BJ (cell line): ENCODE measurements at regions of chr7 and their contacts with region 1.

Region 1: GRCh38 chr7:128739048-128739962 is at the start of gene CALU:
- DNase-seq: peak; percentile 84
- H3K4me3 ChIP-seq: peak within 1 kb of the TSS; percentile 81
- H3K27me3 ChIP-seq: no peaks in the 10 kb centered on the region
- CTCF ChIP-seq: no peak
- polyA plus RNA-seq, gene CALU: 346 and 812 TPM in 2 replicates

Region 2: GRCh38 chr7:128008141-128008540 is 731.2 kb before region 1 on chr7:
- CTCF ChIA-PET with region 1: no interaction called
- POLR2A ChIA-PET with region 1: interaction called, 14 read pairs
- DNase-seq: no peak
- H3K4me3 ChIP-seq: no peak overlapping the region
- H3K27me3 ChIP-seq: no peaks in the 10 kb centered on the region
- CTCF ChIP-seq: no peak

Region 3: DNA sequence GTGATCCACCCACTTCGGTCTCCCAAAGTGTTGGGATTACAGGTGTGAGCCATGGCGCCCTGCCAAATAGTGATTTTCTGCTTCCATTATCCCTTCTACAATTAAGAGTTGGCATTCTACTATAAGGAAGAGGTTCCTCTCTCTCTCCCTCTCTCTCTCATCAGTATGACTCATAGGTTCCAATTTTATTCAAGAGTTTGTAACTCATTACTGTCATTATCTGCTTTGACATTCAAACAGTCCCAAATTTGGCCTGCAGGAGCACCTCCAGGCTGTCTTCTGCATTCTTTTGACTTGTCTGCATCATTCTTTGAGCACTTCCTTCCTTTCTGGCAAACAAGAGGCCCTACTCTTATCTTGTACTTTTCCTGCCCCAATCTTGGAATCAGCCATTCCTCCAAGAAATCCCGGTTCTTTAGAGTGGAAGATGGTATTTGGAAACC is 33.4 kb before region 1 on chr7:
- CTCF ChIA-PET with region 1: no interaction called
- POLR2A ChIA-PET with region 1: interaction called, 19 read pairs
- DNase-seq: peak; percentile 22
- H3K4me3 ChIP-seq: no peak overlapping the region
- H3K27me3 ChIP-seq: no peaks in the 10 kb centered on the region
- CTCF ChIP-seq: peak; percentile 13; the same call in 1 of the 2 replicates

Region 4: DNA sequence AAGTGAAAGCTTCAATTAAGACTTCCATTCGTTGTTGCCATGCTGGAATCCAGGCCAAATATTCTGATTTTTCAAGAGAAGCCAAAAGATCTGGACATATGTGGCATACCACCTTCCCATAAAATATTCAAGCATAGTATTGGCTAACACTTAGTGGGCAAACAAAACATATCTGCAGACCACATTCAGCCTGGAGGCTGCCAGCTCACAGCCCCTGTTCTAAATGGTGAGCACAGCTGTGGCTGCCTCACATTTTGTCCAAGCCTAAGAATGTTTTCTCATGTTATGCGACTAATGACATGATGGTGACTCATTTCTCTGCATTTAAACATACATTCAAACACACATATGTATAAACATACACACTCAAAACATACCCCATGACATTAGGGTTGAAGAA is 10.7 kb before region 1 on chr7:
- CTCF ChIA-PET with region 1: interaction called, 5 read pairs
- POLR2A ChIA-PET with region 1: interaction called, 10 read pairs
- DNase-seq: no peak
- H3K4me3 ChIP-seq: no peak overlapping the region
- H3K27me3 ChIP-seq: peaks cover 6% of the 10 kb centered on the region
- CTCF ChIP-seq: no peak

Region 5: DNA sequence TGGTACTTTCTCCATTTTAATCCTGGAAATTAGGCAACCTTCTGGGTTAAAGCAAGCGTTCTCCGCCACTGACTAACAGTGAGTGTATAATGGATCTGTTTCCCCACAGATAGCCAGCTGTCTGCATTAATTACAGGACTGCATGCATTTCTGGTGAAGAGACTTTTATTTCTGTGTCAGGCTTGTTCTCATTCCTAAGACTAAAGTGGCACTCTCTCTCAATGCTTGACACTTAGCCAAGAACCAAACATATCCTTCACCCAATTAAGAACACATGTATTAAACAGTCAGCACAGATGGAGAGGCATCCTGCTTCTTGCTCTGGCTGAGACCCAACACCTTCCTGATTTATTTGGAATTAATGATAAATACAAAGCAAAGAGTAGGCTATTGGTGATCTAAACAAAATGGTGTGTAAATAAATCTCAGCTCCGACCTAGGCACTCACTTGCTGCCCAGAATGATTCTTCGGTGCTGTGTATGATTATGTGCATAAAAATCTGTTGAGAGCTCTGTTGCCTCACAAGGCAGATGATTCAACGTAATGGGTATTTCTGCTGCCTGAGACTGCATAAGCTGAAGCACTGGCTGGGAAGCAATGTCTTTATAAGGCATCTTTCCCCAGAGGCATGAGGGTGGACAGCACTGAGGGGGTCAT is 16.6 kb after region 1 on chr7:
- CTCF ChIA-PET with region 1: interaction called, 12 read pairs
- POLR2A ChIA-PET with region 1: interaction called, 19 read pairs
- DNase-seq: peak; percentile 94
- H3K4me3 ChIP-seq: no peak overlapping the region
- H3K27me3 ChIP-seq: no peaks in the 10 kb centered on the region
- CTCF ChIP-seq: no peak

Region 6: DNA sequence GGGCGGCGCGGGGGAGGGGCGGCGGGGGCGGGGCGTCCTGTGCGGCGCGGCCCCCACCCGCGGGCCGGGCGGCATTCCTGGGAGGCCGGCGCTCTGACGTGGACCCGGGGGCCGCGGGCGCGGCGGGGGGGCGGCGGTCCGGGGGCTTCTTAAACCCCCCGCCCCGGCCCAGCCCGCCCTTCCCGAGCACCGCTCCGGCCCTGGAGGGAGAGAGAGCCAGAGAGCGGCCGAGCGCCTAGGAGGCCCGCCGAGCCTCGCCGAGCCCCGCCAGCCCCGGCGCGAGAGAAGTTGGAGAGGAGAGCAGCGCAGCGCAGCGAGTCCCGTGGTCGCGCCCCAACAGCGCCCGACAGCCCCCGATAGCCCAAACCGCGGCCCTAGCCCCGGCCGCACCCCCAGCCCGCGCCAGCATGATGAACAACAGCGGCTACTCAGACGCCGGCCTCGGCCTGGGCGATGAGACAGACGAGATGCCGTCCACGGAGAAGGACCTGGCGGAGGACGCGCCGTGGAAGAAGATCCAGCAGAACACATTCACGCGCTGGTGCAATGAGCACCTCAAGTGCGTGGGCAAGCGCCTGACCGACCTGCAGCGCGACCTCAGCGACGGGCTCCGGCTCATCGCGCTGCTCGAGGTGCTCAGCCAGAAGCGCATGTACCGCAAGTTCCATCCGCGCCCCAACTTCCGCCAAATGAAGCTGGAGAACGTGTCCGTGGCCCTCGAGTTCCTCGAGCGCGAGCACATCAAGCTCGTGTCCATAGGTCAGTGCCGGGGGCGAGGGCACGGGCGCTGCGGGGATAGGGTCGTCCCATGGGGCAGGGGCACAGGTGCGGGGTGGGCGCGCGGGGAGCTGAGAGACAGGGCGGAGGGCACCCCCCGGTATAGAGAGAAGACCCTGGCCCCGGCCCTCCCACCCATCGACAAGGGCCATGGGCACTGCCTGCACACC is 91.2 kb after region 1 on chr7 and contains the start of gene FLNC:
- CTCF ChIA-PET with region 1: interaction called, 9 read pairs
- POLR2A ChIA-PET with region 1: interaction called, 12 read pairs
- DNase-seq: no peak
- H3K4me3 ChIP-seq: peak within 1 kb of the TSS; percentile 97
- H3K27me3 ChIP-seq: no peaks in the 10 kb centered on the region
- CTCF ChIP-seq: no peak
- polyA plus RNA-seq, gene FLNC: 24.6 and 58.6 TPM in 2 replicates